ENCODE measurements at regions of chr17 and their contacts with region 1.

Region 1: DNA sequence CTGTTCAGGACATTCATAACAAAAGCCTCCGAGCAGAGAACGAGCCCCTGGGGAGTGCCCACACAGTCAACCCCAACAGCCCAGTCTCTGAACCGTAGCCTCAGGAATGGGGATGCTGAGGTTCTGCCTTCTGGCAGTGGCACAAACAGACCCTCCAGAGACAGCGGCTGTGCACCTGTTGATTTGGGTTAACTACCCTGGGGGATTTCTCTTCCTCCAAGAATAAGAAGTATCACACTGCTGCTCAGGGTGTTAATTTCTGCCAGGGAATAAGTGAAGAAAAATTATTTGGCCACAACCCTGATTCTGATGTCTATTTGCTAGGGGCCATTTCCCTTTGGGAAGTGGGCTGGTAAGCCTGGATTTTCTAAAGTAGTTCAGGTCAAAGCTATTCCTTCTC is 51.0 kb upstream of the PIRT start:
- DNase-seq: no peak
- H3K4me3 ChIP-seq: no peak overlapping the region
- H3K27ac ChIP-seq: no peak overlapping the region
- H3K4me1 ChIP-seq: no peaks in the 10 kb centered on the region
- H3K27me3 ChIP-seq: no peaks in the 10 kb centered on the region
- CTCF ChIP-seq: no peak
- EP300 ChIP-seq: no peak
- POLR2A ChIP-seq: no peak

Region 2: DNA sequence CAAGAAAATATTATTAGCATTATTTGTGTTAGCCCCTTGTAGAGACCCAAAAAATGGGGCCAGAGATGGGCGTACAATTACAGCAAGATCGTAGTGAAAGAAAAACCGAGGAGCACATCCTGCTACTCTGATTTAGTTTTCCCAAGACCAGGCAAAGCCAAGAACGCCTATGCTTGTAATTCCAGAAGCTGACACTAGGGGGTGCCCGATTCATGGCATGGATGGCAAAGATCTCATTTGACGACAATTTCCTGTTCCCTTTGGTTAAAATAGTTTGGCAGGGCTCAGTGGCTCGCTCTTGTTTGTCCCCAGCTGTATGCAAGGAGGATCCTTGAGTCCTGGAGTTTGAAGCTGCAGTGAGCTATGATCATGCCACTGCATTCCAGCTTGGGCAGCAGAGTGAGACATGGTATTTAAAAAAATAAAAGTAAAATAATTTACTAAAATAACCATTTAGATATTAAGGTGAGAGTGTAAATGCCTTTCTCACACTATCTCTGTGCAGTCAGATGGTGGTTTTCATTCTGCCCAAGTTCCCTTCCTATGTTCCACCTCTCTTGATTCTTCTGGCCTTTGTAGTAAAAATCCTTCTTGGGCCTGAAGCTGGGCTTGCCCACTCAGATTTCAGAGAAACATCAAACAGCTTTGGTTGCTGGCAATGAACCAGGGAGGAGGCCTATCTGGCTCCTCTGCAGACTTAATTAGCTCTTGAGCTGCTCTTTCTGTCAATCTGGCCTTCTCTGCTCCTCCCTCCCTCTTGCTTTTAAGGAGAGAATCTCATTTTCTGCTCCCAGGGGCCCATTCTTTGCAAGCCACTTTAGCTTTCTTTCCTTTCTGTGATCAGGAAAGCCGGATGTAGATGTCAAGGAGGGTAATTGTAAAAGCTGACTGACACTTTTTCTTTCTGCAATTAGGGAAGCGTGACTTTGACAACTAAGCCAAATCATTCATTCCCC is 116.2 kb before region 1 on chr17:
- intact Hi-C with region 1: no loop called
- DNase-seq: peak; percentile 60 to 90
- H3K4me3 ChIP-seq: no peak overlapping the region
- H3K27ac ChIP-seq: peak overlapping the region in 3 of 5 donors; percentile 31 to 47 (median 39)
- H3K4me1 ChIP-seq: peaks cover 7 to 22% (median 10%) of the 10 kb centered on the region in 4 donors
- H3K27me3 ChIP-seq: no peaks in the 10 kb centered on the region
- CTCF ChIP-seq: peak in 5 of 7 experiments; percentile 31 to 88 (median 84)
- EP300 ChIP-seq: no peak
- POLR2A ChIP-seq: no peak

Region 3: GRCh38 chr17:11144358-11145233 is 255.7 kb after region 1 on chr17:
- intact Hi-C with region 1: loop called (anchors 10 kb)
- DNase-seq: peak; percentile 68 to 78
- H3K4me3 ChIP-seq: no peak overlapping the region
- H3K27ac ChIP-seq: no peak overlapping the region
- H3K4me1 ChIP-seq: no peaks in the 10 kb centered on the region
- H3K27me3 ChIP-seq: peaks cover 0 to 3% (median 0%) of the 10 kb centered on the region in 3 donors
- CTCF ChIP-seq: peak in 5 of 7 experiments; percentile 30 to 77 (median 45)
- EP300 ChIP-seq: no peak
- POLR2A ChIP-seq: no peak

Measured in stomach (tissue), 19 donors.